ENCODE measurements at regions of chr17 and their contacts with region 1.

Region 1: DNA sequence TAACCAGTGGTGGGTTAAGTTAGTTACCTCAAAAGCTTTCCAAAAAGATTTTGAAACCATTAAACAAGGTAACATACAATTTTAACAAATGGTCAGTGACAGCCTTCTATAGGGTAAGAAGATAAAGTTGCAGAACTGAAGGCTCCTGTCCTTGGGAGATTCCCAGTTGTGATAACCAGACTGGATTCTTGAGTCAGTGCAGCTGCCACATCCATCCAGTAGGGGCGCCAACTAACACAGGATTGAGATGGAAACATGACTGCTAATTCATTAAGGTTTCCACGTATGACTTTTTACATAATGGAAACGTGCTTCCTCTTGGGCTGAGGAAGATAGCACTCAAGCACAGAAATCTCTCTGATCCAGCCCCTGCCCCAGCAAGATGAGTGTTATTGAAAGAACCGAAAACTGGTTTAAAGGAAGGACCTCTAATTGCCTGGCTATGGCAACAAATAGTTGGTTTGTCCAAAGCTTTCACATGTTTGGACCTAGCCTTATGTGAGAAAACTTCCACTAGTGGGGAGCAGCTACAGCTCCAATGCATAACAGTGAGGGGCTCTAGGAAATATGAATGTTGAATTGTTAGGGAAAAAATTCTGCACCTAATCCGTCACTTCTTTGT is 269.8 kb upstream of the MYOCD start:
- H3K4me3 ChIP-seq: no peak overlapping the region
- H3K27ac ChIP-seq: no peak overlapping the region
- H3K4me1 ChIP-seq: peaks cover 5% of the 10 kb centered on the region; the same call in 1 of the 2 replicates
- CTCF ChIP-seq: no peak

Region 2: DNA sequence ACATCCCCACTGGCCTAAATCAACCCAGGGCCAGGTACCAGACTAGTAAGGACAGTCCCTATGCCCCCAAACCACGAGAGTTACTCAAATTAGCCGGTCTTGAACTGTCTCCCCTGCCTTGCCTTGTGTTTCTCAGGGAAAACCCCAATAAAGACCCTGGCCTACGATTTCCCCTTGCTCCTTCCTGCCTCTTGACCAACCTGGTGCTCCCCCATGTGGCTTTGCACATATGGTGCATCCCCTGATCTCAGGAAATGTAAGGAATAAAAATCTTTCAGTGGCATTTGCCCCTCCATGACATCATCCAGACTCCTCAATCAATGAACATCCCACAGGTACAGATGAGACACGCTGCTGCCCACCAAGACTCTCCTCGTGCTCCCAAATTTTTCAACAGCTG is 486.5 kb before region 1 on chr17:
- CTCF ChIA-PET with region 1: no interaction called
- POLR2A ChIA-PET with region 1: no interaction called
- H3K4me3 ChIP-seq: no peak overlapping the region
- H3K27ac ChIP-seq: no peak overlapping the region
- H3K4me1 ChIP-seq: no peaks in the 10 kb centered on the region
- CTCF ChIP-seq: no peak

Region 3: DNA sequence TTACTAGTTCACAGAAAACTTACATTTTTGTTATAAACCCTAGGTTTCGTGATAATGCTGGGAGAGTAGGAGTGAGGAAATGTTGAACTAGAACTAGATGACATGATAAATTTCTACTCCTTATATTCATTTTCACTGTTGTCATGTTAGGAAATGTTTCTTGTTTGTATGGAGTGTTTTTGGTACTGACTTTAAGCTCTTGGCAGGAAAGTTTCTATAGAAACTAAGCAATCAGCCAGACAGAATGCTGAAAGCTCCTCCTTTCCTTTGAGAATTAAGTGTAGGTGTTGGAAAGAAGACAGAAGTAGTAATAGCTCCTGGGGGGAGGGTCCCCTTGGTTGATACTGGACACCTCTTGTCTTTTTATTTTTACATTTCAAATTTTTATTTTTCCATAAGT is 65.4 kb before region 1 on chr17:
- CTCF ChIA-PET with region 1: no interaction called
- POLR2A ChIA-PET with region 1: no interaction called
- H3K4me3 ChIP-seq: no peak overlapping the region
- H3K27ac ChIP-seq: no peak overlapping the region
- H3K4me1 ChIP-seq: no peaks in the 10 kb centered on the region
- CTCF ChIP-seq: no peak

Region 4: GRCh38 chr17:12406623-12407215 is 10.9 kb after region 1 on chr17:
- CTCF ChIA-PET with region 1: interaction called, 11 read pairs
- POLR2A ChIA-PET with region 1: no interaction called
- H3K4me3 ChIP-seq: no peak overlapping the region
- H3K27ac ChIP-seq: no peak overlapping the region
- H3K4me1 ChIP-seq: peaks cover 4% of the 10 kb centered on the region; the same call in 1 of the 2 replicates
- CTCF ChIP-seq: no peak

Region 5: GRCh38 chr17:12507026-12507595 is 111.3 kb after region 1 on chr17:
- CTCF ChIA-PET with region 1: no interaction called
- POLR2A ChIA-PET with region 1: no interaction called
- H3K4me3 ChIP-seq: no peak overlapping the region
- H3K27ac ChIP-seq: no peak overlapping the region
- H3K4me1 ChIP-seq: no peaks in the 10 kb centered on the region
- CTCF ChIP-seq: no peak